H1 (cell line): ENCODE measurements at regions of chr12 and their contacts with region 1.

Region 1: GRCh38 chr12:56724972-56725722 is at the start of gene NACA:
- DNase-seq: peak; percentile 84 to 91
- H3K4me3 ChIP-seq: peak within 1 kb of the TSS; percentile 75 to 100 (median 98)
- H3K27ac ChIP-seq: peak within 1 kb of the TSS; percentile 93
- H3K4me1 ChIP-seq: peaks cover 7 to 25% (median 16%) of the 10 kb centered on the region in 4 experiments; a peak in 6 of 7 replicates
- H3K27me3 ChIP-seq: no peaks in the 10 kb centered on the region
- CTCF ChIP-seq: no peak
- EP300 ChIP-seq: no peak
- POLR2A ChIP-seq: peak; percentile 93
- RAD21 ChIP-seq: no peak; a peak in 1 of 4 replicates
- total RNA-seq, gene NACA: 1,027 and 1,063 TPM in 2 replicates

Region 2: GRCh38 chr12:56630160-56630632 is 95.0 kb before region 1 on chr12 and contains the start of gene BAZ2A:
- CTCF ChIA-PET with region 1: interaction called, 3 read pairs
- POLR2A ChIA-PET with region 1: interaction called, 42 read pairs
- DNase-seq: peak in 1 of 2 experiments; percentile 93
- H3K4me3 ChIP-seq: peak within 1 kb of the TSS; percentile 65 to 93 (median 88)
- H3K27ac ChIP-seq: peak within 1 kb of the TSS; percentile 50; the same call in 1 of the 2 replicates
- H3K4me1 ChIP-seq: peaks cover 14 to 32% (median 24%) of the 10 kb centered on the region in 4 experiments
- H3K27me3 ChIP-seq: no peaks in the 10 kb centered on the region
- CTCF ChIP-seq: no peak
- EP300 ChIP-seq: peak; percentile 23 to 82; a peak in 2 of 3 replicates
- POLR2A ChIP-seq: no peak
- RAD21 ChIP-seq: no peak
- total RNA-seq, gene BAZ2A: 110 TPM in 2 replicates

Region 3: DNA sequence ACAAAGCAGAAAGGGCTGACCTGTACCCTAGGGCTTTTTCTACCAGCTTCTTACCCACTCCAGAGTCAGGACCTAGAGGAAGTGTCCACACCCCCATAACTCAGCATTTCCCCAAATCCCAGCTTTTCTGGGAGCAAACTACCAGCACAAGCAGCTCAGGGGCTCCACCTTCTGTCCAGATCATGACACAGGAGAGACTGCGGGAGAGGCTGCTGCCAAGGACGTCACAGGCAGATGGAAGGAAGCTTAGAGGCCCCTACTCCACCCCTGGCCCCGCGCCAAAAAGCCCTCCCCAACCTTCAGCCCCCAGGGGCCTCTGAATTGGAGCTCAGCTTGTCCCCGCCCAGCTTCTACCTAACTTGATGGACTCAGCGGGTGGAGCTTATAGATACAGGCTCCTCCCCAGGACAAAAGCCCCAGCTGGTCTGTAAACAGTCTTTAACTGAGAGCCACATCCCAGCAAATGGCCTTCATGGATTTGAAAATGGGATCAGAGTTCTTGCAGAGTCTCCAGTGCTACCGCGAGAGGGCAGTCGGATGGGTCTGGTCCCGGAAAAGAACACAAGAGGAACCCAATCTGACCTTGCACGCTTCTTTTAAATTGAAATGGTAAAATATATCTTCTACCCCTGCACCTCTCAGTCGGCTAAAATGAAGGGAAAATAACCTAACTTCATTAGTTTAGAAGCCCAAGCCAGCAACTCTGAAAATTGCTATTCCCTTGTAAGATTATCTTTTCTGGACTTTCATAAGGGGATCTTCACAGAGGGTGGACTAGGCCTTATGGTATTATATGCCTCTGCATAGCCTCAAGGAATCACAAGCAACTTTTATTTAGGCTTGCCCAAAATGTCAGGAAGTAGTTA is 88.2 kb before region 1 on chr12:
- CTCF ChIA-PET with region 1: interaction called, 3 read pairs
- POLR2A ChIA-PET with region 1: interaction called, 42 read pairs
- DNase-seq: peak; percentile 92 to 95
- H3K4me3 ChIP-seq: peak overlapping the region; percentile 86 to 90 (median 88); a peak in 7 of 8 replicates
- H3K27ac ChIP-seq: peak overlapping the region; percentile 27; the same call in 1 of the 2 replicates
- H3K4me1 ChIP-seq: peaks cover 8 to 36% (median 24%) of the 10 kb centered on the region in 4 experiments
- H3K27me3 ChIP-seq: no peaks in the 10 kb centered on the region
- CTCF ChIP-seq: peak; percentile 67 to 70 (median 68)
- EP300 ChIP-seq: peak in 1 of 2 experiments; percentile 72; a peak in 1 of 3 replicates
- POLR2A ChIP-seq: peak in 1 of 2 experiments; percentile 35; a peak in 1 of 3 replicates
- RAD21 ChIP-seq: peak; percentile 68 to 73

Region 4: GRCh38 chr12:56645717-56646446 is 79.3 kb before region 1 on chr12 and contains the start of gene ATP5F1B:
- CTCF ChIA-PET with region 1: no interaction called
- POLR2A ChIA-PET with region 1: interaction called, 19 read pairs
- DNase-seq: peak; percentile 88 to 96
- H3K4me3 ChIP-seq: peak within 1 kb of the TSS; percentile 90 to 99 (median 97)
- H3K27ac ChIP-seq: peak within 1 kb of the TSS; percentile 95
- H3K4me1 ChIP-seq: no peaks in the 10 kb centered on the region
- H3K27me3 ChIP-seq: no peaks in the 10 kb centered on the region
- CTCF ChIP-seq: no peak
- EP300 ChIP-seq: no peak
- POLR2A ChIP-seq: peak; percentile 98 to 99
- RAD21 ChIP-seq: no peak
- total RNA-seq, gene ATP5F1B: 900 and 930 TPM in 2 replicates

Region 5: DNA sequence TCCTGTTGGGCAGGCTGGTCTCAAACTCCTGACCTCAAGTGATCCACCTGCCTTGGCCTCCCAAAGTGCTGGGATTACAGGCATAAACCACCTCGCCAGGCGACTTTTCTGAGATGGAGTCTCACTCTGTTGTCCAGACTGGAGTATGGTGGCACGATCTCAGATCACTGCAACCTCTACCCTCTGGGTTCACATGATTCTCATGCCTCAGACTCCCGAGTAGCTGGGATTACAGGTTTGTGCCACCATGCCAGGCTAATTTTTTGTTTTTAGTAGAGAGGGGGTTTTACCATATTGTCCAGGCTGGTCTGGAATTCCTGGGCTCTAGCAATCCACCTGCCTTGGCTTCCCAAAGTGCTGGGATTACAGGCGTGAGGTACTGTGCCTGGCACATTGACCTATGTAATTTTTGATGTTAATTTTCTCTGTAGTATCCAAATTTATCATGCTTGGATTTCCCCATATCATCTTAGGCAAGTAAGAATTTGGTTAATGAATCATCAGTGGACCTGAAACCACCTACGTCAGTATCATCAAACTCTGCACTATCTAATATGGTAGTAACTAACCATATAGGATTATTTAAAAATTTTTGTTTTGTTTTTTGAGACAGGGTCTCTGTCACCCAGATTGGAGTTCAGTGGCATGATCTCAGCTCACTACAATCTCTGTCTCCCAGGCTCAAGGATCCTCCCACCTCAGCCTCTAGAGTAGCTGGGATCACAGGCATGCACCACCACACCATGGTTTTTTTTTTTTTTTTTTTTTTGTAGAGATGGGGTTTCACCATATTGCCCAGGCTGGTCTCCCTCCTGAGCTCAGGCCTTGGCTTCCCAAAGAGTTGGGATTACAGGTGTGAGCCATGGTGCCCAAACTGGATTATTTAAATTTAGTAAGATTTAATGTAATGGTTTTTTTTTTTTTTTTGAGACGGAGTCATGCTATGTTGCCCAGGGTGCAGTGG is 67.4 kb before region 1 on chr12:
- CTCF ChIA-PET with region 1: no interaction called
- POLR2A ChIA-PET with region 1: interaction called, 10 read pairs
- DNase-seq: no peak
- H3K4me3 ChIP-seq: no peak overlapping the region
- H3K27ac ChIP-seq: no peak overlapping the region
- H3K4me1 ChIP-seq: no peaks in the 10 kb centered on the region
- H3K27me3 ChIP-seq: no peaks in the 10 kb centered on the region
- CTCF ChIP-seq: no peak
- EP300 ChIP-seq: no peak
- POLR2A ChIP-seq: no peak
- RAD21 ChIP-seq: no peak

Region 6: DNA sequence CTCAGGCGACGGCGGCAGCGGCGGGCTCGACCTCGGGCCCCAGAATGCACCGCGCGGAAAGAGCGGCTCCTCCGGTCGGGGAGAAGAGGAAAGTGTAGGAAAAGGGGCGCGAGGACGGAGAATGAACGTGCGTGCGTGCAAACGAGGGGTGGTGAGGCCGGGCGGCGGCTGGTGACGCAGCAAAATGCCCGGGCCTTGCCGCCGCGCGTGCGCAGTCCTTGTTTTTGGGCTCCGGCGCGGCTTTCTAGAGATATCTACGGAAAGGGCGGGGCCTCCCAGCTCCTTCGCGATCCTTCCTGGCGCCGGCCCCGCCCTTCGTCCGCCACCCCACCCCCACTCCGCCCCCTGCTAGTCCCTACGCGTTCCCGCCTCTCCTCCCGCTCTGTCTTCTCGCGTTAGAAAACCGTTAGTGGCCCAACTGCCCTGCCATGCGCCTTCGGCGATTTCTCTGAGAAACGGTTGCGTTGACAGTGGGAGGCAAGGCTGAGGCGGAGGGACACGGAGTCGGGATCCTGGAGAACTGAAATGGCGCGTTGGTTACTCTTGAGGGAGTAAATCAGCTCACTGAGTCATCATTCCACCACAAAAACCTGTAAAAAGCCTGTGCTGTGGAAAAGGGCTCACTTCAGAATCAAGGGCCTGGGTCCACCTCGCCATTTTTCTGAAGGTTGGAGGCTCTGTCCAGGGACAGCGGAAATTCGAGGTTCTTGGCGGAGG is 36.9 kb before region 1 on chr12 and contains the start of gene PTGES3:
- CTCF ChIA-PET with region 1: interaction called, 3 read pairs
- POLR2A ChIA-PET with region 1: interaction called, 1,406 read pairs
- DNase-seq: peak; percentile 94 to 97
- H3K4me3 ChIP-seq: peak within 1 kb of the TSS; percentile 81 to 98 (median 94)
- H3K27ac ChIP-seq: peak within 1 kb of the TSS; percentile 92
- H3K4me1 ChIP-seq: no peaks in the 10 kb centered on the region; a peak in 2 of 7 replicates
- H3K27me3 ChIP-seq: no peaks in the 10 kb centered on the region
- CTCF ChIP-seq: no peak
- EP300 ChIP-seq: peak in 1 of 2 experiments; percentile 5; a peak in 1 of 3 replicates
- POLR2A ChIP-seq: peak; percentile 91
- RAD21 ChIP-seq: no peak
- total RNA-seq, gene PTGES3: 453 and 464 TPM in 2 replicates

Region 7: DNA sequence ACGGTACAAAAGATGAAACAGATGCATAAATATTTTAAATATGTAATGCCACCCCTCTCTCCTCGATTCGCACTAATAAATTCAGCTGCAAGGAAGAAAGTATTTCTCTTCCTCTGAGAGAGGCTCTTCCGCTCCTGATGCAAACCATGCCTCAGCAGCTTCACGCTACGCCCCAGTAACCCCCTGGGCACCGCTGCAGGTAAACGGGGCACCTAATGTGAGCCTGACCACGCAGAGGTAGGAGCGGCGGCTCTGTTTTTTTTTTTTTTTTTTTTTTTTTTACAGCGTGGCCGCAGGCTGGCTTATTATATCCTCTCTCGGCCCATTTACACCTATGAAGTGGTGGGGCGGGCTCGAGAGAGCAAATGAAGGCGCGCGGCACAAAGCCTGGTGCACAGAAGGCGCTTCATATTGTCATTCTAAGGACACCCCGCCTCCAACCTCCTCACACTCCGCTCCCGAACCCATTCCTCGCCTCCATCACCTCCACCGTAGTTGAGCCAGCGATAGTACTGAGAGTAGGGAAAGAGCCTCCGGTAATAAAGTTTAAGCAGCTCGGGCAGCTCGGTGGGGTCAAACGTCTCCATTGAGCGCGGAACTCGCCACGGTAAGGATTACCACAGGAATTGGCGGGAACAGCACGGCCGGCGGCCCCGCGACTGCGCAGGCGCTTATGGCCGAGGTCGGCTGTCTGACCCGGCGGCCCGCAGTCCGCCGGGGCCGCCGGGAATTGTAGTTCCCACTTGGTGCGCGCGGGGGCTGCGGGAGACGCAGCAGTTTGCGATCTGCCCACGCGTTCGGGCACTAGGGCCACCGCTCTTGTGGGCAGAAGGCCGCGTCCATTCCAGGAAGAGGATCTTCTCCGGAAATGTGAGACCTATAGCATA is 26.8 kb after region 1 on chr12 and contains the start of gene PRIM1:
- CTCF ChIA-PET with region 1: interaction called, 5 read pairs
- POLR2A ChIA-PET with region 1: interaction called, 1,406 read pairs
- DNase-seq: peak; percentile 64 to 94
- H3K4me3 ChIP-seq: peak within 1 kb of the TSS; percentile 70 to 95 (median 90)
- H3K27ac ChIP-seq: peak within 1 kb of the TSS; percentile 98
- H3K4me1 ChIP-seq: peaks cover 0 to 4% (median 0%) of the 10 kb centered on the region in 4 experiments; a peak in 2 of 7 replicates
- H3K27me3 ChIP-seq: no peaks in the 10 kb centered on the region
- CTCF ChIP-seq: no peak
- EP300 ChIP-seq: no peak
- POLR2A ChIP-seq: peak in 1 of 2 experiments; percentile 95; a peak in 2 of 3 replicates
- RAD21 ChIP-seq: no peak
- total RNA-seq, gene PRIM1: 52.4 and 57.9 TPM in 2 replicates